Brain microvascular endothelial cell (primary cell): ENCODE measurements at regions of chr15 and their contacts with region 1.

Region 1: DNA sequence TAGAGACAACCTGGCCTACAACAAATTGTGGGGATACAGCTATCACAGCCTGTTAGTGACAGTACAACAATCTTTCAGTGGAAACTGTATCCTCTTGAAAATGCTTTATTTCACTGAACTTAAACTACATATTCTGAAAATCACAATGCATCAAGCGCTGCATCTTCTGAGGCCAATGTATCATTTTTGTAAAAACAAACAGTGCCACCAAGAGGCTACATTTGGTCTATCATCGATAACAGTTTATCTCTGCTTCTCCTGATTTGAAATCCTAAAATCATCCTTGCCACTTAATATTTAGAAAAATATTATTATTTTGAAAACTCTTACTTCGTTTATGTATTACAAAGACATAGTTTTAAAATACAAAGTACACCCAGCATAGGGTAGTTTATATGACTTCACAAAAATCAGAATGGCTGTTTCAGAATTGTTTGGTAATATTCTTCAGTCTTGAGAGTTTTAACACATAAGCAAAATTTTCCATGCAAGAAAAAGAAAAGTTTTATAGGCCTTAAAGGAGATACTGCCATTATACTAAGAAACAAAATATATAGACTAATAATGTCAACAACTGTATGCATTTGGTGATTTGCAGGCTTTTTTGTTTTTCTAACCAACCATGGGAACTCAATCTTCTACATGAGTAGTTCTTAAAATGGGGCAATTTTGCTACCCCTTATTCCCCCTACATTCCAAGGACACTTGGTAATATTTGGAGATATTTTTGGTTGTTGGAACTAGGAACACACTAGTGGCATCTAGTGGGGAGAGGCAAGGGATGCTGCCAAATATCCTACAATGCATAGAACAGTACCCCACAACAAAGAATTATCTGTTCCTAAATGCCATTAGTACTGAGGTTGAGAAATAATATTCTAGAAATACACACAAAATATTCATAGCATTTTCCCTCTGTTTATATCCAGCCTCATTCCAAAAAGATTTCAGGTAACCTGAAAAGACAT is 42.3 kb downstream of the WDR72 start:
- DNase-seq: peak; percentile 5
- H3K4me3 ChIP-seq: no peak overlapping the region
- H3K27ac ChIP-seq: no peak overlapping the region
- H3K27me3 ChIP-seq: no peaks in the 10 kb centered on the region
- CTCF ChIP-seq: peak; percentile 55

Region 2: DNA sequence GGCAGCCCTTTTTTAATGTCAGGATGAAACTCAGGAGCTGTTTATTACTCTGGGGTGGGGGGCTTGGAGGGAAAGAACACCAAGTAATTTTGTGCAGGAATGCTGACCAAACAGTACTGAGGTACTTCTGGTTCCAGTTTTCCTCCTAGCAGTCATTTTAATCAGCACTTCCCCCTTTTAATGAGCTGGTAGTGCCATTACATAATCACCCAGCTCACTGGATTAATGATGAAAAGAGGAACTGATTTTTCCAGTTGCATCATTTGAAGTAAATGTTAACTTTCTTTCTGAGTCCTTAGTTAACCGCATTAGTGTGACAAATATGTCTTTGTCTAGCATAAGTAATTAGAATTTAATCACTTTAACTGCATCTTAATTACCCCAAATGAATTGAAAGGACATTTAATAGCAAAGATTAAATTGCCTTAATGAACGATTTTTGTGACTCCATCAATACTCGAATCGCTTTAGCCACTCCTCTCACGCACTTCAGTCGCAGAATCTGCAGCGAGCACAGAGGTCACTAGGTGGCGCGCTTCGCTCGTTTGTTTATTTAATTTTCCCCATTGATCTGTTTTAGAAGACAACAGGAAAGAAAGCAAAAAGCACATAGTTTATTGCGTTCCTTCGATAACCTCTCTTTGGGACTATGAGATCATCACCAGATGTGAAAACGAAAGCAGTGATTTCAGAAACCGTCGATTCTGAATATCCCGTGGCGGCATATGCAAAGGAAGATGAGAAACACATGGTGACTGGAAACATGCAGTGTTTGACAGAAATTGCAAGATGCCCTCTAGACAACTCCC is 936.8 kb before region 1 on chr15:
- in situ Hi-C with region 1: loop called (anchors 25 kb)
- DNase-seq: peak; percentile 52
- H3K4me3 ChIP-seq: no peak overlapping the region
- H3K27ac ChIP-seq: no peak overlapping the region
- H3K27me3 ChIP-seq: peaks cover 41% of the 10 kb centered on the region
- CTCF ChIP-seq: peak; percentile 93